Cardiac septum (tissue), 1 donor: ENCODE measurements at regions of chr15 and their contacts with region 1.

Region 1: DNA sequence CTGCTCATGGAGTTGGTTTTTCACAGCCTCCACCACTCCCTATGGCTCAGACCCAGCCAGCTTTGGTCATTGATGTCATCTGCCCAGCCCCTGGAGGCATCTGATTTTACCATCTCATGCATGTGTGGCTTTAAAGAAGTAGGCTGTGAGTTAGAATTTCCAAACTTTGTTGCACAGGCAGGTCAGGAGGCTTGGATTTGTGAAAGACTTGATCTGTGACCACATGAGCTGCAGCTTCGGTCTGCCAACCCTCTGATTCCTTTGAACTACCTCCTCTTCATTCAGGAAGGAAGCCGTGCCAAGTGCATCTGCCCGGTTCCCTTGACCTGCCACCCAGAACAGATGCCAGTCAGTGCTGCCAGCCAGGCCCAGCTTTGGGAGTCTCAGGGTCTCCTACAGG is 9.2 kb downstream of the CTXND1 start:
- DNase-seq: no peak

Region 2: GRCh38 chr15:80090879-80091503 is 151.8 kb before region 1 on chr15:
- intact Hi-C with region 1: no loop called
- DNase-seq: no peak

Region 3: DNA sequence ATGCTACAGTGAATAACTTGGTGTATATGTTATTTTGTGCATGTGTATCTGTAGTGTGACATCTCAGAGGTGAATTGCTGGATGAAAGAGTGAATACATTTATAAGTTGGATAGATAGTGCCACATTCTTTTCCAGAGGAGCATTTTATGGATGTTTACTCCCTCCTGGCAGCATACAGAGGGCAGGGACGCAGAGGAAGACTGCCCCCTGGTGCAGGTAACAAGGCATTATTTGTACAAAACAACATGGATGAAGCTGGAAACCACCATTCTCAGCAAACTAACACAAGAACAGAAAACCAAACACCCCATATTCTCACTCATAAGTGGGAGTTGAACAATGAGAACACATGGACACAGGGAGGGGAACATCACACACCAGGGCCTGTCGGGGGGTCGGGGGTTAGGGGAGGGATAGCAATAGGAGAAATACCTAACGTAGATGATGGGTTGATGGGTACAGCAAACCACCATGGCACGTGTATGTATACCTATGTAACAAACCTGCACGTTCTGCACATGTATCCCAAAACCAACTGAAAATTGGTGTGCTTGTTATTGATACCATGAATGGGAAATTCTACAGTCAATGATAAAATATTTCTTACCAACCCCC is 67.1 kb after region 1 on chr15:
- intact Hi-C with region 1: loop called (anchors 1 kb)
- DNase-seq: no peak